B cell (primary cell): ENCODE measurements at regions of chr11 and their contacts with region 1.

Region 1: DNA sequence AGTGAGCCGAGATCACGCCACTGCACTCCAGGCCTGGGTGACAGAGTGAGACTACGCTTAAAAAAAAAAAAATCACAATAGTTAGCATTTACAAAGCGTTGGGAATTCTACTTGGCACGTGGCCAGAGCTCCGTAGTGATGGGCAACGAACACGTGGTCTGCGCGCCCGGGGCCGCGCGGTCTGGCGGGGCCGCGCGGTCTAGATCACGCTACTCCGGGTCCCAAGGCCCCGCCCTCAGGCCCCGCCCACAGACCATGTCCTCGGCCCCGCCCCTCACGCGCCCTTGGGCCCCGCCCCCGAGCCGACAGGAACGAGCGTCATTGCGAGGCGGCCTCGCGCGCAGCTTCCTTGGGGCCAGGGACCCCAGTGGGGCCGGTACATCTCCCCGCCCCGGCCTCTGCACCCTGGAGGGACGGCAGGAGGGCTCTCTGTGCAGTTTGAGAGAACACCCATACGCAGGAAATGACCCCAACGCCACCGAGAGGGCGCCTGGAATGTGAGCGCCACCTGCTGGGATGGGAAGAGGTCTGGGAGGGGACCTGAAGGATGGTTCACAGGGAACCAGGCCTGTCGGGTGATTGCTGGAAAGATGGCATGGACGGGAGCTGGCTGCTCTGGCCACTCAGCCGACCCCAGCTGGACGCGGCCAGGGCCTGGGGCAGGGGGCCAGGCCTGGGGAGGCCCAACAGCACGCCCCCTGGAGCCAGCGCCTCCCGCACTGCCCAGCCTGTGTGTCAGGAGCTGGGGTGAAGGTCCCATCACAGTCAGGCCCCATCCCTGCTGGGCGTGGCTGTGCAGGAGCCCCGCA is 2.0 kb upstream of the PTDSS2 start:
- DNase-seq: peak; percentile 95
- ATAC-seq: peak; percentile 73
- H3K4me3 ChIP-seq: peak overlapping the region; percentile 53 to 85 (median 69)
- H3K4me3 Mint-ChIP-seq: peak overlapping the region; percentile 98
- H3K27ac ChIP-seq: peak overlapping the region; percentile 88 to 93
- H3K27ac Mint-ChIP-seq: peak overlapping the region; percentile 96
- H3K4me1 ChIP-seq: peaks cover 29 to 43% of the 10 kb centered on the region in 2 donors
- H3K4me1 Mint-ChIP-seq: peaks cover 26% of the 10 kb centered on the region
- H3K27me3 ChIP-seq: no peaks in the 10 kb centered on the region
- H3K27me3 Mint-ChIP-seq: no peaks in the 10 kb centered on the region
- CTCF ChIP-seq: peak; percentile 74

Region 2: GRCh38 chr11:236774-237767 is 211.1 kb before region 1 on chr11 and contains the start of gene PSMD13:
- CTCF ChIA-PET with region 1: no interaction called
- POLR2A ChIA-PET with region 1: no interaction called
- intact Hi-C with region 1: loop called (anchors 1 kb)
- DNase-seq: peak; percentile 91
- ATAC-seq: peak; percentile 77
- H3K4me3 ChIP-seq: peak within 1 kb of the TSS; percentile 89 to 98 (median 95)
- H3K4me3 Mint-ChIP-seq: peak within 1 kb of the TSS; percentile 99
- H3K27ac ChIP-seq: peak within 1 kb of the TSS; percentile 94 to 99
- H3K27ac Mint-ChIP-seq: peak within 1 kb of the TSS; percentile 100
- H3K4me1 ChIP-seq: peaks cover 18 to 22% of the 10 kb centered on the region in 2 donors
- H3K4me1 Mint-ChIP-seq: peaks cover 38% of the 10 kb centered on the region
- H3K27me3 ChIP-seq: no peaks in the 10 kb centered on the region
- H3K27me3 Mint-ChIP-seq: no peaks in the 10 kb centered on the region
- CTCF ChIP-seq: no peak
- total RNA-seq, gene PSMD13: 96.2 and 104 TPM in 2 replicates

Region 3: DNA sequence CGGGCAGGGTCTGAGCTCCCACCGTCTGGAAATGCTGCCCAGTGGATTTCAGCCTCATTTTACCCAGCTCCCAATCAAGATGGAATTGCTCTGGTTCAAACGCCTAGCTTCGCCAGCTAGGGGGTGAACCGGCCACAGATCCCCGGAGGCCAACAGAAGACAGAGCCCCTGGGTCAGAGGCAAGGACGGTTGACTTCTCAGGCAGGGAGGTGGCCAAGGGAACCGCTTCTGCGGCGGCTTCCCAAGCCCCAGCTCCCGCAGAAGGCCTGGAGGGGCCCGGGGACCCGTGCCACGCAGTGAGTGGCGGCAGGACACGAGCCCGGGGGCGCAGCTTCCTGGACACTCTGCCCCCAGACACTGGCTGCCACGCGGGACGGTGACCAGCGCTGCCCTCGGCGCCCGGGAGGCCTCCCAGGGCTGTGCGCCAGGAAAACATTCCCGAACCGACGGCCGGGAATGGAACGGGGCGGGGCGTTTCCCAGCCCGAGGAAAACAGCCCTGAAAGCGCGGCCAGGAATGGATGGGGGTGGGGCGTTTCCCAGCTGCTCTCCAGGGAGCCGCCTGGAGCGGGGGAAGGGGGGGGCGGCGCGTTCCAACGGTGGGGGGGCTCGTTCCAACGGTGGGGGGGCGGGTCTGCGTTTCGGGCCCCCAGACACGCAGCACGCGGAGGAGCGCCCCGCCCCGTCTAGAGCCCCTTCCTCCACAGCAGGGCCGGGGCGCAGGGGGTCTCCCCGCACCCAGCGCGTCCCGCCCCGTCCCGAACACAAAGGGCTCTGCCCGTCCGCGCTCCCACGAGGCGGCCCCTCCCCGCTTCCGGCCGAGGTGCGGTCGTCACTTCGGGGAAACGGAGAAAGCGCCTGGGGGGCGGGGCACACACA is 92.3 kb before region 1 on chr11:
- CTCF ChIA-PET with region 1: interaction called, 5 read pairs
- POLR2A ChIA-PET with region 1: interaction called, 10 read pairs
- intact Hi-C with region 1: no loop called
- DNase-seq: peak; percentile 85
- ATAC-seq: peak; percentile 56
- H3K4me3 ChIP-seq: peak overlapping the region in 4 of 5 experiments; percentile 41 to 53 (median 43)
- H3K4me3 Mint-ChIP-seq: peak overlapping the region; percentile 88
- H3K27ac ChIP-seq: peak overlapping the region; percentile 81 to 85
- H3K27ac Mint-ChIP-seq: peak overlapping the region; percentile 90
- H3K4me1 ChIP-seq: peaks cover 13 to 20% of the 10 kb centered on the region in 2 donors
- H3K4me1 Mint-ChIP-seq: peaks cover 18% of the 10 kb centered on the region
- H3K27me3 ChIP-seq: no peaks in the 10 kb centered on the region
- H3K27me3 Mint-ChIP-seq: no peaks in the 10 kb centered on the region
- CTCF ChIP-seq: no peak

Region 4: DNA sequence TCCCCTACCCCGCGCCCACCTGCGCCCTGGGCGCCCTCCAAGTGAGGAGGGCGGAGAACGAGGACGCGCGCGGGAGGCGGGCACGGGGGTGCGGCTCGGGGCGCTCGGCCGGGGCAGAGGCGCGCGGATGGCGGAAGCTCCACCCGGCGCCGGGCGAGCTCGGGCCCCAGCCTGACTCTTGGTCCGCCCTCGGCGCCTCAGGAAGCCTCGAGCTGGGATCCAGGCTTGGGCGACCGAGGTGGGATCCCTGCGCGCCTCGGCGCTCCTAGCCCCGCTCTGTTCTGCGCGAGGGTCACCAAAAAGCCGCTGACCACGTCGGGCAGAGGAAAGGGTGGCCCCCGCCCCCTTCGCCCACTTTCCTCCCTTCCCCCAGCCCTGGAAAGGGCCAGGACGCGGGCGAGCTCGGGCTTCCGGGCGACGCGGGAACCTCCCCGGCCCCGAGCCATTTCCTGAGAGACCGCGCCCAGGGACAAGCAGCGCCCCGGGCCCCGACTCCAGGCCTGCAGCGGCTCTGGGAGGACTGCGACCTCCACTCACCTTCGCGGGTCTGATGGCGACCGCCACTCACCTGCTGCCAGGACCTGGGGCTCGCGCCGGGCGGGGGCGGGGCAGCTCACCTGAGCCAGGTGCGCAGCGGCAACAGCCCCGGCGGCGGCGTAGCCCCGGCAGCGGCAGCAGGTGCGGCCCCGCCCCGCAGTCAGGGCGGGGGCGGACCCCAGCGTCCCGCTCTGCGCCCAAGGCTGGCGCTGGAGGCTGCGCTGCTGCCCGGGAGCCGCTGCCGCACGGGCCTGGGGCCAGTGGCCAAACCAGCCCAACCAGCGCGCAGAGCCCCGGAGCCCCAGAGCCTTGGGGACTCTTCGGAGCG is 31.1 kb before region 1 on chr11:
- CTCF ChIA-PET with region 1: interaction called, 17 read pairs
- POLR2A ChIA-PET with region 1: interaction called, 5 read pairs
- intact Hi-C with region 1: loop called (anchors 2 kb)
- DNase-seq: peak; percentile 65
- ATAC-seq: peak; percentile 53
- H3K4me3 ChIP-seq: peak overlapping the region in 4 of 5 experiments; percentile 65 to 79 (median 71)
- H3K4me3 Mint-ChIP-seq: peak overlapping the region; percentile 89
- H3K27ac ChIP-seq: peak overlapping the region; percentile 41 to 53
- H3K27ac Mint-ChIP-seq: peak overlapping the region; percentile 76
- H3K4me1 ChIP-seq: peaks cover 24 to 37% of the 10 kb centered on the region in 2 donors
- H3K4me1 Mint-ChIP-seq: peaks cover 24% of the 10 kb centered on the region
- H3K27me3 ChIP-seq: no peaks in the 10 kb centered on the region
- H3K27me3 Mint-ChIP-seq: no peaks in the 10 kb centered on the region
- CTCF ChIP-seq: no peak

Region 5: DNA sequence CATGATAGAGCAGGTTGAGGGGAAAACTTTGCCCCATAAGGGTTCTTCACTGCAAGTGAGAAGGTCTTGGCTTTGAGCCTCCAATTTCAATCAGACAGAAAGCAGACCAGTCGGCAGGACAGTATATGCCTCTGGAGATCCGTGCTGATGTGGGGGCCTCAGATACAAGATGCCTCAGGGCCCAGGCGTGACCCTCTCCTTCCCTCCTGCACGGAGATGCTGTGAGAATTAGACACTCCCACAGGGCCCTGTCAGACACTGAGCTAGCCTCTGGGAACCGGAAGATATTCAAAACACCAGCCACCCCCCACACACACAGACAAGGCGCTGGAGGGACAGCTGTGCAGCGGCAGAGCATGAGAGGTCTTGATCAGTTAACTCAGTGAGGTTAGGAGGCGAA is 63.4 kb after region 1 on chr11:
- CTCF ChIA-PET with region 1: interaction called, 10 read pairs
- POLR2A ChIA-PET with region 1: interaction called, 26 read pairs
- intact Hi-C with region 1: loop called (anchors 1 kb)
- DNase-seq: no peak
- ATAC-seq: no peak
- H3K4me3 ChIP-seq: no peak overlapping the region
- H3K4me3 Mint-ChIP-seq: no peak overlapping the region
- H3K27ac ChIP-seq: no peak overlapping the region
- H3K27ac Mint-ChIP-seq: no peak overlapping the region
- H3K4me1 ChIP-seq: peaks cover 4 to 7% of the 10 kb centered on the region in 2 donors
- H3K4me1 Mint-ChIP-seq: peaks cover 9% of the 10 kb centered on the region
- H3K27me3 ChIP-seq: no peaks in the 10 kb centered on the region
- H3K27me3 Mint-ChIP-seq: no peaks in the 10 kb centered on the region
- CTCF ChIP-seq: no peak

Region 6: GRCh38 chr11:765025-765801 is 317.1 kb after region 1 on chr11:
- CTCF ChIA-PET with region 1: no interaction called
- POLR2A ChIA-PET with region 1: no interaction called
- intact Hi-C with region 1: loop called (anchors 1 kb)
- DNase-seq: peak; percentile 81
- ATAC-seq: peak; percentile 86
- H3K4me3 ChIP-seq: no peak overlapping the region
- H3K4me3 Mint-ChIP-seq: no peak overlapping the region
- H3K27ac ChIP-seq: peak overlapping the region in 1 of 2 donors; percentile 12
- H3K27ac Mint-ChIP-seq: peak overlapping the region; percentile 50
- H3K4me1 ChIP-seq: no peaks in the 10 kb centered on the region
- H3K4me1 Mint-ChIP-seq: peaks cover 2% of the 10 kb centered on the region
- H3K27me3 ChIP-seq: no peaks in the 10 kb centered on the region
- H3K27me3 Mint-ChIP-seq: no peaks in the 10 kb centered on the region
- CTCF ChIP-seq: peak; percentile 74